CD8-positive, alpha-beta memory T cell (primary cell): ENCODE measurements at regions of chr2 and their contacts with region 1.

Region 1: DNA sequence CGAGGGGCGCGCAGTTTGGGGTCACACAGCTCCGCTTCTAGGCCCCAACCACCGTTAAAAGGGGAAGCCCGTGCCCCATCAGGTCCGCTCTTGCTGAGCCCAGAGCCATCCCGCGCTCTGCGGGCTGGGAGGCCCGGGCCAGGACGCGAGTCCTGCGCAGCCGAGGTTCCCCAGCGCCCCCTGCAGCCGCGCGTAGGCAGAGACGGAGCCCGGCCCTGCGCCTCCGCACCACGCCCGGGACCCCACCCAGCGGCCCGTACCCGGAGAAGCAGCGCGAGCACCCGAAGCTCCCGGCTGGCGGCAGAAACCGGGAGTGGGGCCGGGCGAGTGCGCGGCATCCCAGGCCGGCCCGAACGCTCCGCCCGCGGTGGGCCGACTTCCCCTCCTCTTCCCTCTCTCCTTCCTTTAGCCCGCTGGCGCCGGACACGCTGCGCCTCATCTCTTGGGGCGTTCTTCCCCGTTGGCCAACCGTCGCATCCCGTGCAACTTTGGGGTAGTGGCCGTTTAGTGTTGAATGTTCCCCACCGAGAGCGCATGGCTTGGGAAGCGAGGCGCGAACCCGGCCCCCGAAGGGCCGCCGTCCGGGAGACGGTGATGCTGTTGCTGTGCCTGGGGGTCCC is at the start of gene ITGA4:
- DNase-seq: peak; percentile 76 to 90 (median 84)
- H3K4me3 ChIP-seq: peak within 1 kb of the TSS; percentile 81
- H3K4me3 Mint-ChIP-seq: peak within 1 kb of the TSS; percentile 90 to 100 (median 95)
- H3K27ac ChIP-seq: peak within 1 kb of the TSS; percentile 88
- H3K27ac Mint-ChIP-seq: peak within 1 kb of the TSS; percentile 92 to 99 (median 96)
- H3K4me1 ChIP-seq: peaks cover 26% of the 10 kb centered on the region
- H3K4me1 Mint-ChIP-seq: peaks cover 39 to 54% (median 53%) of the 10 kb centered on the region in 3 donors
- H3K27me3 ChIP-seq: no peaks in the 10 kb centered on the region
- H3K27me3 Mint-ChIP-seq: no peaks in the 10 kb centered on the region
- total RNA-seq, gene ITGA4: 142 TPM

Region 2: GRCh38 chr2:181104512-181105115 is 352.6 kb before region 1 on chr2:
- CTCF ChIA-PET with region 1: interaction called, 27 read pairs
- POLR2A ChIA-PET with region 1: interaction called, 9 read pairs
- DNase-seq: peak in 3 of 5 donors; percentile 2 to 56 (median 49)
- H3K4me3 ChIP-seq: no peak overlapping the region
- H3K4me3 Mint-ChIP-seq: peak overlapping the region in 2 of 7 donors; percentile 3 to 27
- H3K27ac ChIP-seq: no peak overlapping the region
- H3K27ac Mint-ChIP-seq: peak overlapping the region; percentile 0 to 89 (median 26)
- H3K4me1 ChIP-seq: peaks cover 39% of the 10 kb centered on the region
- H3K4me1 Mint-ChIP-seq: peaks cover 38 to 54% (median 50%) of the 10 kb centered on the region in 3 donors
- H3K27me3 ChIP-seq: no peaks in the 10 kb centered on the region
- H3K27me3 Mint-ChIP-seq: peaks cover 0 to under 1% of the 10 kb centered on the region in 2 donors

Region 3: DNA sequence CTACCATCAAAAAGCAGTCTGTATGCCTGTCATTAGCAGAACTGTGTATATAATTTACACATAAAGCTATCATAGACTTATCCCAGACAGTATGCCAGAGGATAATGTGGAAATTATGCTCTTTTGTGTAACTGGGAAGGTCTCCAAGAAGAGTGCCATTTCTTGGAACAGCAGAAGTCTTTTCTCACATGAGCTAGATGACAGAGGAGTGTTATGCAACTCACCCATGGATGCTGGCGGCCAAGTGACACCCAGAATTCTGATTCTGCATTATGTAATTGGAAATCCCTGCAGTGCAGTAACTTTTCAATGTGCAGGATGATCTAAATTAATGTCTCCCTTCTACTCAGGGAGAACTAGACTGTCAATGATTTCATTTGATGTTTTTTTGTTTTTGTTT is 316.8 kb before region 1 on chr2:
- CTCF ChIA-PET with region 1: interaction called, 24 read pairs
- POLR2A ChIA-PET with region 1: interaction called, 4 read pairs
- DNase-seq: peak in 1 of 5 donors; percentile 55
- H3K4me3 ChIP-seq: no peak overlapping the region
- H3K4me3 Mint-ChIP-seq: peak overlapping the region; percentile 57 to 89 (median 78)
- H3K27ac ChIP-seq: peak overlapping the region; percentile 36
- H3K27ac Mint-ChIP-seq: peak overlapping the region; percentile 91 to 100 (median 96)
- H3K4me1 ChIP-seq: peaks cover 65% of the 10 kb centered on the region
- H3K4me1 Mint-ChIP-seq: peaks cover 80 to 93% (median 85%) of the 10 kb centered on the region in 3 donors
- H3K27me3 ChIP-seq: no peaks in the 10 kb centered on the region
- H3K27me3 Mint-ChIP-seq: no peaks in the 10 kb centered on the region

Region 4: GRCh38 chr2:181305301-181306123 is 151.7 kb before region 1 on chr2:
- CTCF ChIA-PET with region 1: interaction called, 22 read pairs
- POLR2A ChIA-PET with region 1: interaction called, 4 read pairs
- DNase-seq: peak in 4 of 5 donors; percentile 6 to 76 (median 46)
- H3K4me3 ChIP-seq: peak overlapping the region; percentile 1
- H3K4me3 Mint-ChIP-seq: peak overlapping the region; percentile 4 to 78 (median 68)
- H3K27ac ChIP-seq: peak overlapping the region; percentile 45
- H3K27ac Mint-ChIP-seq: peak overlapping the region; percentile 92 to 99 (median 96)
- H3K4me1 ChIP-seq: peaks cover 70% of the 10 kb centered on the region
- H3K4me1 Mint-ChIP-seq: peaks cover 82 to 89% (median 88%) of the 10 kb centered on the region in 3 donors
- H3K27me3 ChIP-seq: no peaks in the 10 kb centered on the region
- H3K27me3 Mint-ChIP-seq: no peaks in the 10 kb centered on the region

Region 5: GRCh38 chr2:181430406-181431118 is 26.7 kb before region 1 on chr2:
- CTCF ChIA-PET with region 1: interaction called, 16 read pairs
- POLR2A ChIA-PET with region 1: interaction called, 3 read pairs
- DNase-seq: peak in 2 of 5 donors; percentile 45 to 46
- H3K4me3 ChIP-seq: no peak overlapping the region
- H3K4me3 Mint-ChIP-seq: peak overlapping the region in 2 of 7 donors; percentile 17 to 28
- H3K27ac ChIP-seq: no peak overlapping the region
- H3K27ac Mint-ChIP-seq: peak overlapping the region in 7 of 8 donors; percentile 59 to 92 (median 83)
- H3K4me1 ChIP-seq: peaks cover 5% of the 10 kb centered on the region
- H3K4me1 Mint-ChIP-seq: peaks cover 20 to 32% (median 21%) of the 10 kb centered on the region in 3 donors
- H3K27me3 ChIP-seq: no peaks in the 10 kb centered on the region
- H3K27me3 Mint-ChIP-seq: no peaks in the 10 kb centered on the region

Region 6: GRCh38 chr2:181483876-181484275 is 26.6 kb after region 1 on chr2:
- CTCF ChIA-PET with region 1: no interaction called
- POLR2A ChIA-PET with region 1: no interaction called
- DNase-seq: no peak
- H3K4me3 ChIP-seq: no peak overlapping the region
- H3K4me3 Mint-ChIP-seq: no peak overlapping the region
- H3K27ac ChIP-seq: no peak overlapping the region
- H3K27ac Mint-ChIP-seq: peak overlapping the region in 7 of 8 donors; percentile 2 to 75 (median 15)
- H3K4me1 ChIP-seq: no peaks in the 10 kb centered on the region
- H3K4me1 Mint-ChIP-seq: peaks cover 40 to 68% (median 41%) of the 10 kb centered on the region in 3 donors
- H3K27me3 ChIP-seq: no peaks in the 10 kb centered on the region
- H3K27me3 Mint-ChIP-seq: no peaks in the 10 kb centered on the region